Naive thymus-derived CD4-positive, alpha-beta T cell (primary cell): ENCODE measurements at regions of chr2 and their contacts with region 1.

Region 1: DNA sequence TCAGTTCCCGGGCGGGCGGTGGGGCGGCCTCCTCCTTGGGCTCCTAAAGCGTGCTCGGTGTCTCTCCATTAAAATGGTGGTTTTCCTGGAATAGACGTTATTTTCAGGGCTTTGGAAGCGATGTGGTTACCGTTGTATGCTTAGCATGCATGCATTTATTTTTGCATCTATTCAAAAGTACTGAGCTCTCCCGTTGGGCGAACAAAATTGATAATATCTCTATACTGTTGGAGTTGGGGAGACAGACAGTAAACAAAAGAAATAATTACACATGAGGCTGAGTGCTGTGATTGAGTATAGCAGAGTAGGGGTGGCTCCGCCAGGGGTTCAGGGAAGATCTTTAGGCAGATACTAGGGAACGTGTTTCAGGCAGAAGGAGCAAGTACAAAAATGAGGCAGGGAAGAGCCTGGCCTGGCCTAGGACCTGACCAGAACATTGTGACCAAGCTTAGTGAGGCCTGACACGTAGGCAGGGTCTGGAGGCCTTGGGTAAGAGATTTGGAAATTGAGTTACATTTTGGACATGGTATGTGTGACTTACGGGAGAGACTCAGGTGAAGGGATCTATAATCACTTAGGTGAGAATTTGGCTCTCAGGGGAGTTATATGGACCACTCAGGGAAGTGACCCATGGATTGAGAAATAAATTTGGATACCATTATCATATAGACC is 674 bp downstream of the NCAPH start:
- DNase-seq: no peak
- ATAC-seq: no peak
- H3K4me3 ChIP-seq: peak overlapping the region; percentile 87
- H3K4me3 Mint-ChIP-seq: peak overlapping the region; percentile 59 to 91 (median 82)
- H3K27ac ChIP-seq: peak overlapping the region; percentile 91
- H3K27ac Mint-ChIP-seq: peak overlapping the region; percentile 29 to 92 (median 77)
- H3K4me1 ChIP-seq: peaks cover 3 to 20% of the 10 kb centered on the region in 2 donors
- H3K4me1 Mint-ChIP-seq: peaks cover 18 to 62% (median 25%) of the 10 kb centered on the region in 7 donors
- H3K27me3 ChIP-seq: no peaks in the 10 kb centered on the region
- H3K27me3 Mint-ChIP-seq: no peaks in the 10 kb centered on the region

Region 2: DNA sequence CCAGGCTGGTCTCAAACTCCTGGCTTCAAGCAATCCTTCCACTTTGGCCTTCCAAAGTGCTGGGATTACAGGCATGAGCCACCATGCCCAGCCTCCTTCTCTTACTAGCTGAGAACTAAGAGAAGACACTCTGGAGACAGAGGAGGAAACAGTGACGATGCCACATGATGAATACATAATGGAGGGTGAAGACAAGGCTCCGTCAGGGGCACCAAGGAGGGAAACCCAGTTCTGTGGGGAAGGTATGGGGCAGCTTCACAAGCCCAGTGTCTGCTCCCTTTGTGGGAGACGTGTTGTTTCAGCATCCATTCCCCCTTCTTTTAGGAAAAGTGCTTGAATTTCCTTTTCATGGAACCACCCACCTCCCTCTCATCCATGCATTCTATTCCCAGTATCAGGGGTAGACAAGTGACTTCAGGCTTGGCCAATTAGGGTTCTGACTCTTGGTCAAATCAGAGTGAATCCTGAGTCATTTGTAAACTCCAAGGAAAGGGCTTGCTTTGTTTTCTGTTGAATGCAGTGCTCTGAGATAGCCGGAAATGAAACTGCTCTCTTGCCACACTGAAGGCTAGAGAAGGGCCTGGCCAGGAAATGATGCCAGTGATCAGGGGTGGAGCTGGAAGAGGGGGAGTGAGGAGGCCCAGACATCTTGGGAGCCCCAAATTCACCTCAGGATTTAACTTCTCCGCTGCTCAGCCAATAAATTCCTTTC is 94.2 kb before region 1 on chr2:
- CTCF ChIA-PET with region 1: no interaction called
- POLR2A ChIA-PET with region 1: no interaction called
- intact Hi-C with region 1: no loop called
- DNase-seq: peak in 8 of 9 donors; percentile 17 to 57 (median 42)
- ATAC-seq: peak; percentile 89
- H3K4me3 ChIP-seq: peak overlapping the region; percentile 43
- H3K4me3 Mint-ChIP-seq: peak overlapping the region; percentile 53 to 79 (median 68)
- H3K27ac ChIP-seq: peak overlapping the region; percentile 67
- H3K27ac Mint-ChIP-seq: peak overlapping the region; percentile 91 to 96 (median 94)
- H3K4me1 ChIP-seq: peaks cover 24 to 30% of the 10 kb centered on the region in 2 donors
- H3K4me1 Mint-ChIP-seq: peaks cover 26 to 57% (median 52%) of the 10 kb centered on the region in 7 donors
- H3K27me3 ChIP-seq: no peaks in the 10 kb centered on the region
- H3K27me3 Mint-ChIP-seq: no peaks in the 10 kb centered on the region

Region 3: DNA sequence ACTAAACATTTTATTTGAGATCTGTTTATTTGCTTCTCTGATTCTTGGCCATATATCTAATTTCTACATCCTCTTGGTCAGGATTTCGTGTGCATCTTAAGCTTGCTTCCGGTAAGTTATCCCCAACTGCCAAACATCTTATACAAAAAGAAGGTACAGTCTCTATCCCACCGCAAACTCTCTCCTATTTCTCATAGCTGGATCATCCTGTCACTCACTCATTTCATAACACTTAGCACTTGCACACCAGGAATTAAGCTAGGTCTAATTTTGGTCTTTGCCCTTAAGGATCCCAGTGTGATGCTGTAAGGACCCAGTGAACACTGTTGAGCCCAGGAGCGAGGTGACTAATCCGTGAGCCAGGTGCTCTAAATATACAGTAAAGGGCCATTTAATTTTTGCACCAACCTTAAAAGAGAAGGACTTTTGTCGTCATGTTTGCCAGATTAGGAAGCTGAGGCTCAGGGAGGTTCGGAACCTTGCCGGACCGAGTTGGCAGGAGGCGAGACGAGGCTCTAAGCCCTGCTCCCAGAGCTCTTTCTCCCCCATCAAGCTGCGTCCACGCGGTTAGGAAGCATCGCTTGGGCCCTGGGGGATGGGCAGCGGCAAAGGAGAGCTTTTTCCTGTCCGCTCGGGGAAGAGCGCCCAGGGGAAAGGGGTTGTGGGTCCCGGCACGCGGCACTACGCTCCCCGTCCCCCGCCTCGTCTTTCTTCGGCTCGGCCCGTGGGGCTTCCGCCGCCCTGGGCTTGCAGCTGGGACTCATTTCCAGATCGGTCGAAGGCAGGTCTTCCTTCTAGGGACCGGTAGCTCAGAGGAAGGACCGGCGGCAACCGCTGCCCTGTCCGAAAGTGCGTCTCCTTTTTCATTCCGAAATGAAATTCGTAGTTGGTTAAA is 15.3 kb before region 1 on chr2:
- CTCF ChIA-PET with region 1: interaction called, 3 read pairs
- POLR2A ChIA-PET with region 1: interaction called, 54 read pairs
- intact Hi-C with region 1: loop called (anchors 1 kb)
- DNase-seq: peak in 3 of 9 donors; percentile 13 to 62 (median 19)
- ATAC-seq: peak; percentile 28
- H3K4me3 ChIP-seq: peak overlapping the region; percentile 82
- H3K4me3 Mint-ChIP-seq: peak overlapping the region; percentile 86 to 95 (median 91)
- H3K27ac ChIP-seq: peak overlapping the region; percentile 53
- H3K27ac Mint-ChIP-seq: peak overlapping the region in 7 of 9 donors; percentile 6 to 89 (median 62)
- H3K4me1 ChIP-seq: peaks cover 21 to 42% of the 10 kb centered on the region in 2 donors
- H3K4me1 Mint-ChIP-seq: peaks cover 7 to 67% (median 33%) of the 10 kb centered on the region in 7 donors
- H3K27me3 ChIP-seq: no peaks in the 10 kb centered on the region
- H3K27me3 Mint-ChIP-seq: peaks cover 0 to 7% (median 0%) of the 10 kb centered on the region in 5 donors